ENCODE measurements at regions of chr15 and their contacts with region 1.

Region 1: DNA sequence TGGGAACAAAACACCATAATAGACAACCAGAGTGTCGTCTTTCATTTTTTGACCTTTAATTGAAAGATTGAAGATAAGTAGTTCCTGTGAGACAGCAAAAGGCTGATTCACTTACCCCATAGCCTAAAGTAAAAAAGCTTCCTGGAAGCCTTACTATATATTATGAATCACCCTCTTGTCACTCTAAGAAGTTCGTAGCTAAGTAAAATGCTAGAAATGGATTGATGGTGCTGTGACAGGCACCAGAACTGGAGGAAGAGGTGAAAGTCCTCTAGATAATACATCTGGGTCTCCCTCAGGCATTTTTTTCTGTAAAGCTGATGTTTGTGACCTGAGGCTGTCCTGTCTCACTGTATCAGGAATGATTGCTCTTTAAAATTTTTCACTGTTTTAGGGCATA is 824.6 kb upstream of the SEMA6D start:
- DNase-seq: no peak
- ATAC-seq: no peak
- H3K4me3 ChIP-seq: no peak overlapping the region
- H3K27ac ChIP-seq: no peak overlapping the region
- H3K4me1 ChIP-seq: no peaks in the 10 kb centered on the region
- H3K27me3 ChIP-seq: no peaks in the 10 kb centered on the region
- CTCF ChIP-seq: no peak

Region 2: DNA sequence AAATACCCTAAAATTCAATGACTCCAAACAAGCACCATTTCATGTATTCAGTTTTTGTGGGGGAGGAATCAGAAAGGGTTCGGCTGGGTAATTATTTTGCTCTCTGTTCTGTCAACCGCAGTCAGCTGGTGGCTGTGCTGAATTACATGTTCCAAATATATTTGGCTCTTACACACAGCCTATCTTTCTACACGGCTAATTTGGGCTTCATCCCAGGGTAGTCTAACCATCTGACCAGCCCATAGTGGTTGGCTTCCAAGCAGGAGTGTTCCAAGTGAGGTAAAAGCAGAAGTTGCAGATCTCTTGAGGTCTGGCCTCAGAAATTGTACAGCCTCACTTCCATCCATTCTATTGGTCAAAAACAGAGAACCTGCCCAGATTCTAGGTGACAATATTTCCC is 63.8 kb after region 1 on chr15:
- intact Hi-C with region 1: loop called in 1 of 10 experiments (anchors 10 kb)
- DNase-seq: peak in 1 of 2 donors; percentile 72
- ATAC-seq: peak; percentile 92 to 100 (median 97)
- H3K4me3 ChIP-seq: no peak overlapping the region
- H3K27ac ChIP-seq: peak overlapping the region in 2 of 10 donors; percentile 23 to 36
- H3K4me1 ChIP-seq: peaks cover 0 to 26% (median 9%) of the 10 kb centered on the region in 9 donors
- H3K27me3 ChIP-seq: no peaks in the 10 kb centered on the region
- CTCF ChIP-seq: no peak

Region 3: DNA sequence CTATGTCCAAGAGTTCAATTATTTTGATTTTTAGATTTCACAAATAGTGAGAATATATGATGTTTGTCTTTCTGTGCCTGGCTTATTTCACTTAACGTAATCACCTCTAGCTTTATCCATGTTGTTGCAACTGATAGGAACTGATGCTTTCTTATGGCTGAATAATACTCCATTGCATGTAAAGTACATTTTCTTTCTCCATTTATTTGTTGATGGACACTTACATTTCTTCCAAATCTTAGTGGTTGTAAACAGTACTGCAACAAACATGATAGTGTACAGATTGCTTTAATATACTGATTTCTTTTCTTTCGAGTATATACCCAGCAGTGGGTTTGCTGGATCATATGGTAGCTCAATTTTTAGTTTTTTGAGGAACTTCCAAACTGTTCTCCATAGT is 224.0 kb after region 1 on chr15:
- intact Hi-C with region 1: no loop called
- DNase-seq: no peak
- ATAC-seq: no peak
- H3K4me3 ChIP-seq: no peak overlapping the region
- H3K27ac ChIP-seq: no peak overlapping the region
- H3K4me1 ChIP-seq: no peaks in the 10 kb centered on the region
- H3K27me3 ChIP-seq: no peaks in the 10 kb centered on the region
- CTCF ChIP-seq: peak in 1 of 9 donors; percentile 41

Measured in heart right ventricle (tissue), 16 donors.